Dendritic cell treated with granulocyte-macrophage colony-stimulating factor and Interleukin-4, amounts not matched to agents 40 ng/mL and 50 ng/mL, for 4 days (primary cell): ENCODE measurements at regions of chr2 and their contacts with region 1.

Region 1: GRCh38 chr2:7044261-7045250 is 127.3 kb downstream of the RNF144A start:
- H3K4me3 Mint-ChIP-seq: no peak overlapping the region
- H3K27ac Mint-ChIP-seq: no peak overlapping the region
- H3K4me1 Mint-ChIP-seq: peaks cover 12% of the 10 kb centered on the region
- H3K27me3 Mint-ChIP-seq: peaks cover 1% of the 10 kb centered on the region

Region 2: GRCh38 chr2:6896930-6897759 is 147.4 kb before region 1 on chr2:
- intact Hi-C with region 1: loop called (anchors 1 kb)
- H3K4me3 Mint-ChIP-seq: no peak overlapping the region
- H3K27ac Mint-ChIP-seq: no peak overlapping the region
- H3K4me1 Mint-ChIP-seq: no peaks in the 10 kb centered on the region
- H3K27me3 Mint-ChIP-seq: no peaks in the 10 kb centered on the region

Region 3: DNA sequence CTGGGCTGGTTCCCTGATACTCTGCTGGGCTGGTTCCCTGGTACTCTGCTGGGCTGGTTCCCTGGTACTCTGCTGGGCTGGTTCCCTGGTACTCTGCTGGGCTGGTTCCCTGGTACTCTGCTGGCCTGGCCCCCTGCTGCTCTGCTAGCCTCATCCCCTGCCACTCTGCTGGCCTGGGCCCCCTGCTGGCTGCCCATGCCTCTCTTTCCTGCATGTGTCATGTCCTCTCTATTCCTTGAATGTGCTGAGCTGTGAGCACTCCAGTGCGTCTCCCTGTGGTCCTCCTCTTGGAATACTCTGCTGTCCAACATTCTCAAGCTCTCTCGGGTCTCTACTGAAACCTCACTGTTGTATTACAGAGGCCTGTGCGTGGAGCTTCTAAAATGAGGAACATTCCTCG is 89.0 kb after region 1 on chr2:
- intact Hi-C with region 1: no loop called
- H3K4me3 Mint-ChIP-seq: no peak overlapping the region
- H3K27ac Mint-ChIP-seq: no peak overlapping the region
- H3K4me1 Mint-ChIP-seq: no peaks in the 10 kb centered on the region
- H3K27me3 Mint-ChIP-seq: no peaks in the 10 kb centered on the region

Region 4: GRCh38 chr2:7456762-7457161 is 412.2 kb after region 1 on chr2:
- intact Hi-C with region 1: no loop called
- H3K4me3 Mint-ChIP-seq: no peak overlapping the region
- H3K27ac Mint-ChIP-seq: no peak overlapping the region
- H3K4me1 Mint-ChIP-seq: no peaks in the 10 kb centered on the region
- H3K27me3 Mint-ChIP-seq: no peaks in the 10 kb centered on the region

Region 5: DNA sequence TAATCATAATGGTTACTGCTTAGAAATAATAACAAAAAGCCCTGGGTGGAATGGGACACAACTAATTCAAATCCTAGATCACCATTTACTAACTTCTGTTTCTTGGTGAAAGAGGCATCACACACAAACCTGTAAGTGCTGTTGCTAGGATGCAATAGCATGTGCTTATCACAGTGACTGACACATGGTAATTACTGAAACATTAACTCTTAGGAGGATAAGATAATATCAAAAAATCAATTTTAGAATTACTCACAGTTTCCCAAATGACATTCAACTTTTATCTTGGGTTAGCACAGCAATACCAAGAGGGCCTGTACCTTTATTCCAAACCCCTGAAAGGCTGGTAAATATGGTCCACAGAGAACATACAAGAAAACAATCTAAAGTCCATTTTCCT is 1889.8 kb after region 1 on chr2:
- intact Hi-C with region 1: no loop called
- H3K4me3 Mint-ChIP-seq: no peak overlapping the region
- H3K27ac Mint-ChIP-seq: no peak overlapping the region
- H3K4me1 Mint-ChIP-seq: no peaks in the 10 kb centered on the region
- H3K27me3 Mint-ChIP-seq: no peaks in the 10 kb centered on the region